Natural killer cell (primary cell): ENCODE measurements at regions of chr10 and their contacts with region 1.

Region 1: GRCh38 chr10:50552771-50553535 is 70.8 kb downstream of the SGMS1 start:
- DNase-seq: peak; percentile 29 to 71
- ATAC-seq: peak; percentile 95 to 99 (median 98)
- H3K4me3 ChIP-seq: no peak overlapping the region
- H3K4me3 Mint-ChIP-seq: no peak overlapping the region
- H3K27ac ChIP-seq: no peak overlapping the region
- H3K27ac Mint-ChIP-seq: peak overlapping the region; percentile 5 to 56
- H3K4me1 ChIP-seq: no peaks in the 10 kb centered on the region
- H3K4me1 Mint-ChIP-seq: peaks cover 35 to 38% of the 10 kb centered on the region in 2 donors
- H3K27me3 ChIP-seq: no peaks in the 10 kb centered on the region
- H3K27me3 Mint-ChIP-seq: no peaks in the 10 kb centered on the region
- CTCF ChIP-seq: peak; percentile 54

Region 2: DNA sequence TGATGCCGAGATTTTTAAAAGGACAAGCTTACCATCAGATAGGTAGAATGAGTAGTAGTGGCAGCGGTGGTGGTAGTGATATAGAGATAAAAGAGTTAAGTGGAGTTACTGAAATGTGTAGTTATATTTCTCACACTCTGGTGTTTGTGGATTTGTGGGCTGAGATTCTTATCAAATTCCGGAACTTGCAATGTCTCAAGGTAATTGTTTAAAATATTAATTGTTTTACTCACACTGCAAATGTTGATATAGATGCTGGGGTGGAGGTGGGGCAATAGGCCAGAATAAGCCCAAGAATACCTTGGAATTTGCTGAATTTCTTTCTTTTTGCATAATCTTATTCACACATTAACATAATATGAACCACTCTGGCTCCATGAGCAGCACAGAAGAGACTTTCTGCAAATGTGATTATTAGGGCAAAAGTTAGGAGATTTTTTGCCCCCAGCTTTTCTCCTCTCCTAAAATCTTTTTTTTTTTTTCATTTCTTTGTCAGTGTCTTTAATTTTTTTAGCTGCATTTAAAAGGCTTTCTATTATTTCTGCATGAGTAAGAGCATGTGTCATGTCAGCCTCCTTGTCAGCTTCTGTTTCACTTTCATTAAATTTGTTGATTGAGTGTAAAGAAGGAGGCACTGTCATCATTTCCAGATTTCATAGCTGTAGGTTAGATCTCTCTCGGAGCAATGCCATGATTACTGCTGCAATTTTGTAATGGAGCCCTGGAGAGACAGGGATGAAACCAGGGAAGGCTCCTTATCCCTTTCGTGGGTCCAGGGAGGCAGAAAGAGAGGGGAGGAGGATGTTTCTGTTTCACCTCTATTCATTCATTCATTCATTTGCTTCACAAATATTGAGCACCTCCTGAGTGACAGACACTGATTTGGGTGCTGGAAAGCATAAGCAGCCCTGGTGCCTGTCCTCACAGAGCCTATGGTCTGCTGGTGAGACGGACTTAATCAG is 83.9 kb after region 1 on chr10:
- intact Hi-C with region 1: loop called (anchors 5 kb)
- DNase-seq: peak in 1 of 2 donors; percentile 68
- ATAC-seq: peak; percentile 87 to 90 (median 89)
- H3K4me3 ChIP-seq: peak overlapping the region; percentile 28
- H3K4me3 Mint-ChIP-seq: peak overlapping the region; percentile 90
- H3K27ac ChIP-seq: peak overlapping the region; percentile 25
- H3K27ac Mint-ChIP-seq: peak overlapping the region; percentile 78 to 89
- H3K4me1 ChIP-seq: peaks cover 16% of the 10 kb centered on the region
- H3K4me1 Mint-ChIP-seq: peaks cover 26 to 34% of the 10 kb centered on the region in 2 donors
- H3K27me3 ChIP-seq: peaks cover 6% of the 10 kb centered on the region
- H3K27me3 Mint-ChIP-seq: peaks cover 0 to 16% of the 10 kb centered on the region in 2 donors
- CTCF ChIP-seq: no peak

Region 3: GRCh38 chr10:50653142-50653541 is 100.2 kb after region 1 on chr10:
- intact Hi-C with region 1: loop called (anchors 1 kb)
- DNase-seq: peak in 1 of 2 donors; percentile 65
- ATAC-seq: peak; percentile 52 to 86 (median 78)
- H3K4me3 ChIP-seq: no peak overlapping the region
- H3K4me3 Mint-ChIP-seq: no peak overlapping the region
- H3K27ac ChIP-seq: no peak overlapping the region
- H3K27ac Mint-ChIP-seq: peak overlapping the region in 1 of 2 donors; percentile 14
- H3K4me1 ChIP-seq: no peaks in the 10 kb centered on the region
- H3K4me1 Mint-ChIP-seq: peaks cover 11 to 13% of the 10 kb centered on the region in 2 donors
- H3K27me3 ChIP-seq: no peaks in the 10 kb centered on the region
- H3K27me3 Mint-ChIP-seq: no peaks in the 10 kb centered on the region
- CTCF ChIP-seq: peak; percentile 45